Activated CD8-positive, alpha-beta T cell treated with anti-CD3 and anti-CD28 coated beads, Interleukin-2, amount 10 ng/mL, durations not matched to agents 7 days and 5 days (primary cell): ENCODE measurements at regions of chr16 and their contacts with region 1.

Region 1: DNA sequence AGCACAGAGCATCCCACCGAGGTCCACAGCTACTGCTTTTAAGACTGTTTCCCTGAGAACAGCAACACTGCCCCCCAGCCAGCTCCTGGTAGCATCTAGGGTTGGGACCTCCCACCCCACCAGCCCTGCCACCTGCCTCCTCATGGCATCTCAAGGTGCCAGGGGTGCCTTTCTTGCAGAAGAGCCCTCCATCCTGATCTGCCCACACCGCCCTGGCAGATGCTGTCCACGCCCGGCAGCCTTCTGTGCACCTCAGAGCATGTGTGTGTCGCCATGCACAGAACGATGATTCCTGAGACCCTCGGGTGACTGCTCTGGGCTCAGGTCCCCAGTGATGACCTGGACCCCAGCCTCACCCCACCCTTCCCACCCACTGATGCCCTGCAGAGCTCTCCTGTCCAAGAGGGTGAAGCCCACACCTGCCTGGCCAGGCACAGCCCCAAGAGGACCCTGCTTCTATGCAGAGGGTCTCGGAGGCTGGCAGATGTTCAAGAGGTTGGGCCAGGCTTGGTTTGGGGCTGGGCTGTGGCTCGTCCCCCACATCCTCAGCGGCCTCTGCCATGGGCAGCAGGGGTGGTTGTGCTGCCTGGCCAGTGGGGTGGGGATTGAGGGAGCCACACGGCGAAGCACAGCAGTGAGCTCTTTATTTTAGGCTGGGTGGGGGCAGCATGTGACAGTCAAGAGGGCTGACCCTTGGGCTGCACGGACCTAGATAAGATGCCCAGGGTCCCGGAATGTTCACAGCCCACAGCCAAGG is 5.2 kb upstream of the SPATA2L start:
- DNase-seq: no peak
- ATAC-seq: no peak
- H3K4me3 Mint-ChIP-seq: no peak overlapping the region
- H3K27ac Mint-ChIP-seq: no peak overlapping the region
- H3K4me1 Mint-ChIP-seq: peaks cover 16% of the 10 kb centered on the region
- H3K27me3 Mint-ChIP-seq: no peaks in the 10 kb centered on the region

Region 2: DNA sequence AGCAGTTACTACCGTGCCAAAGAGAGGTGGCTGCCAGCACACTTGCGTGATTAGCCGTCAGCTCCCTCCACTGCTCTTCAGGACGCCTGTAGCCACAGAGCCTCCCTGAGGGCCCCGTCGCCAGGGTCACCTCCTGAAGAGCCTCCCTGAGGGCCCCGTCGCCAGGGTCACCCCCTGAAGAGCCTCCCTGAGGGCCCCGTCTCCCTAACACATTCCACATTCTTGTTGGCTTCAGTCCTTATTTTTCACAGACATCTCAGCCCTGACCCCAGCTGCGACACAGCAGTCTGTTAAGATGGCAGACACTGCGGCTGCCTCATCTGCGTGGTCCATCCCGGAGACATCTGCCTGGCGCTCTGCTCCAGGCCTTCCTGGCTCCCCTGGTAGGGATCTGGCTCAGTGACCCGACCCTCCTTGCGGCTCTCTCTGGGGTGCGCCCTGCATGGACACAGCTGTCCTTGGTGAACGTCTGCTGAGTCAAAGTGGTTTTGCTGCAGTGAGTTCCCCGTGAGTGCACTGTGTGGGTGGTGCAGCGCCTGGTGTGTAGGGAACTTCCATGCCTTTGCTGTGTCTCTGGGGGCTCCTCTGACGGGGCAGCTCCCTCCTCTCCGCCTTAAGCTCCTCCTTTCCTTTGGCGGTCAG is 601.6 kb before region 1 on chr16:
- CTCF ChIA-PET with region 1: no interaction called
- POLR2A ChIA-PET with region 1: no interaction called
- DNase-seq: no peak
- ATAC-seq: no peak
- H3K4me3 Mint-ChIP-seq: no peak overlapping the region
- H3K27ac Mint-ChIP-seq: no peak overlapping the region
- H3K4me1 Mint-ChIP-seq: peaks cover 28% of the 10 kb centered on the region
- H3K27me3 Mint-ChIP-seq: no peaks in the 10 kb centered on the region

Region 3: GRCh38 chr16:89565506-89566372 is 140.9 kb before region 1 on chr16:
- CTCF ChIA-PET with region 1: no interaction called
- POLR2A ChIA-PET with region 1: no interaction called
- DNase-seq: peak; percentile 67
- ATAC-seq: peak; percentile 44
- H3K4me3 Mint-ChIP-seq: peak overlapping the region; percentile 38
- H3K27ac Mint-ChIP-seq: peak overlapping the region; percentile 56
- H3K4me1 Mint-ChIP-seq: peaks cover 50% of the 10 kb centered on the region
- H3K27me3 Mint-ChIP-seq: no peaks in the 10 kb centered on the region

Region 4: DNA sequence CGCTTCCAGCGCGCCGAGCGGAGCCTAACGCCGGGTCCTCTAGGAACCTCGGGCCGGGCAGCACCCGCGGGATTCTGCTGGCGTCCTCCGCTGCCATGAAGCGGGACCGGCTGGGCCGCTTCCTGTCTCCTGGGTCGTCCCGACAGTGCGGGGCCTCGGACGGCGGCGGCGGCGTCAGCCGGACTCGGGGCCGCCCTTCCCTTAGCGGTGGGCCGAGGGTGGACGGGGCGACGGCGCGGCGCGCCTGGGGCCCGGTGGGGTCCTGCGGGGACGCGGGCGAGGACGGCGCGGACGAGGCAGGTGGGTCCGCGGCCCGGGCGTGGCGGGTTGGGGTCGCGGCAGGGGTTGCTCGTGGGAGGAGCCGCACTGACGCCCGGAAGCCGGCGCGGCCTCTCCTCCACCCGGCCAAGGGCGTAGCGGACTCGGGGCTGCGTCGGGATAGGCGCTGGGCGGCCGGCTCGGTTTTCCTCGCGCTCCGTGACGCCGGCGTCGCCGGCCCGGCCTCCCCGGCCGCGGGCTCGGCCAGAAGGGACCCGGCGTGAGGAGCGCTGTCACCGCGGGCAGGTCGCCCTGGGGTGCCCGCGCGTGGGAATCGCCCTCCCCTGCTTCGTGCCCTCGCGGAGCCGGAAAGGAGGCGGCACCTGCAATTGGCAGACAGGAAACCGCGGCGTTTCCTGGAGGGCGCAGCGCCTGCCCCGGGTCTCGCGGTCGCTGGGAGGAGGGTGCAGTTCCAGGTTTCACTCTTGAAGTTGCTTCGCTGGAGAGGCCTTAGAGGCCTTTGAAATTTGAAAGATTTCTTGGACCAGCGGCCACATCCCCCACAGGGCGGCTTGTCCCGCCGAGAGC is 15.1 kb after region 1 on chr16:
- CTCF ChIA-PET with region 1: interaction called, 35 read pairs
- POLR2A ChIA-PET with region 1: interaction called, 10 read pairs
- DNase-seq: peak; percentile 91
- ATAC-seq: peak; percentile 40
- H3K4me3 Mint-ChIP-seq: peak overlapping the region; percentile 93
- H3K27ac Mint-ChIP-seq: peak overlapping the region; percentile 98
- H3K4me1 Mint-ChIP-seq: peaks cover 40% of the 10 kb centered on the region
- H3K27me3 Mint-ChIP-seq: no peaks in the 10 kb centered on the region

Region 5: GRCh38 chr16:89737341-89738071 is 30.8 kb after region 1 on chr16:
- CTCF ChIA-PET with region 1: interaction called, 21 read pairs
- POLR2A ChIA-PET with region 1: interaction called, 5 read pairs
- DNase-seq: peak; percentile 70
- ATAC-seq: peak; percentile 63
- H3K4me3 Mint-ChIP-seq: peak overlapping the region; percentile 15
- H3K27ac Mint-ChIP-seq: peak overlapping the region; percentile 71
- H3K4me1 Mint-ChIP-seq: peaks cover 32% of the 10 kb centered on the region
- H3K27me3 Mint-ChIP-seq: no peaks in the 10 kb centered on the region

Region 6: DNA sequence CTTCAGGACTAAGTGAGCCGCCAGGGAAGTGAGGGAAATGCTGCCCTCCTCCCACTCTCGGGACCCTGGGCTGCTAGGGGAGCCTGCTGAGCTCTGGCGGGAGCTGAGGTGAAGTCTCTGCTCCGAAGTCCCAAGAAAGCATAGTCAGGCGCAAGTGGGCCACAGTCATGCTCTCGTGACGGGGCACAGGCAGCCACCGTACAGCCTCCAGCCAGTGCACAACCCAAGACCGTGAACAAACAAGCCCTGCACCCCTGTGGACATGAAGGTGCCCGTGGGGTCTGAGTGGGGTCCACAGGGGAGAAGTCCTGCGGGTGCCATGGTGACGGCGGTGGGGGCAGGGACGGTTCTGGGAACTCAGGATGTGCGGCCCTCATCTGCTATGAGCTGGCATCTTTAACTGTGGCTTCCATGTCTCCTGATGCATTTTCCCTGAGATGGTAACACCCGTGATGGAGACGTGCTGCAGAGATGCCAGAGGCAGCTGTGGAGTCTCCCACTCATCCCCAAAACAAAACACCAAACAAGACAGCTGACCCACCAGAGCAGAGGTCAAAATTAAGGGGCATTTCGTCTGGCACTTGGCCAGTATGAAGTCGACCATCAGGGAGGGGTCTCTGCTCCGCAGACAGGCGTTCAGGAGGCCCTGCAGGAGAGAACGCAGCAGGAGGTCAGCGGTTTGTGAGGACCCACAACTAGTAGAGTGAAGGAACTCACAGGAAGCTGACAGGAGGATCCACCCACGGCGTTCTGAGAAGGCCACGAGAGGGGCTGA is 39.5 kb after region 1 on chr16:
- CTCF ChIA-PET with region 1: interaction called, 21 read pairs
- POLR2A ChIA-PET with region 1: no interaction called
- DNase-seq: no peak
- ATAC-seq: no peak
- H3K4me3 Mint-ChIP-seq: no peak overlapping the region
- H3K27ac Mint-ChIP-seq: no peak overlapping the region
- H3K4me1 Mint-ChIP-seq: peaks cover 2% of the 10 kb centered on the region
- H3K27me3 Mint-ChIP-seq: no peaks in the 10 kb centered on the region